ENCODE measurements at regions of chr2 and their contacts with region 1.

Region 1: DNA sequence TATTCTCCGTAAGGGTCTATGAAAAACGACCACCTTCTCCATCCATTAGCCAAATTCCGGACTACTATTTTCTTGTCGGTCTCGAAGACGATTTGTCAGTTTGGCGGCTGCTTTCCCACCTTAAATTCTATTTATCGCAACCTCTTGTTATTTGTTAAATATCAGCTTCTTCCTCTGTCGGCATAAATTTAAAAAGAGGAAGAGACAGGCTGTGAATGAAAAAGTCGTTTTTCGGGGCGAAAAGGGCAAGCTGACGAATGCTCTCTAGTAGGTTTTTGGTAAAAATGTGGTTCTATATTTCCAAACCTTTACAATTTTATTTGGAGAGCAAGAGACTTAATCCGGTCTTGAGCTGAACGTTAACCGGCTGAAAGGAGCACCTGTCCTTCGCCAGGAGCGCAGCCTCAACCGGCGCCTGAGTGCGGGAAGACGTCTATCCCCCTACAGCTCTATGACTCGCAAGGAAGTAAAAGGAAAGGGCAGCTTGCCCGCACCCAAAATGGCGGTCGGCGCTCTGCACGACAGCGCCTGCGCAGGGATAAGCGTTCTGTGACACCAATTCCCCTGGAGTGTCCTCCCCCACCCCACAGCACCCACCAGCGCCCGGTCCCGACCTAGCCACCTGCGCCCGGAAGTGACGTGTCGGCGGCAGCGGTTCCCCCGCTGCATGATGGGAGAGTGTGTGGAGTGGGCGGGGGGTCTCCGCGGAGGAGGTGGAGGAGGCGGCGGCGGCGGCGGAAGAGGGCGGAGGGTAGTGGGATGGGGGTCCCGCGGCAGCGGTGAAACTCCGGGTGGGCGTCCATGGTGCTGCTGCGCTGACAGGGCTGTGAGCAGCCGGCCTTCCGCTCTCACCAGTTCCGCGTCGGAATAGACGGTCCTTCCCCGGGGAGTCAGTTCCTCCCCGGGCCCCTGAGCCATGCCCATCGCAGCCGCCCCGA is at the start of gene AFTPH:
- DNase-seq: peak; percentile 99
- H3K4me3 Mint-ChIP-seq: peak within 1 kb of the TSS; percentile 99
- H3K27ac Mint-ChIP-seq: peak within 1 kb of the TSS; percentile 100
- H3K4me1 Mint-ChIP-seq: peaks cover 26% of the 10 kb centered on the region
- H3K27me3 Mint-ChIP-seq: no peaks in the 10 kb centered on the region
- total RNA-seq, gene AFTPH: 25.3 to 27.3 TPM

Region 2: DNA sequence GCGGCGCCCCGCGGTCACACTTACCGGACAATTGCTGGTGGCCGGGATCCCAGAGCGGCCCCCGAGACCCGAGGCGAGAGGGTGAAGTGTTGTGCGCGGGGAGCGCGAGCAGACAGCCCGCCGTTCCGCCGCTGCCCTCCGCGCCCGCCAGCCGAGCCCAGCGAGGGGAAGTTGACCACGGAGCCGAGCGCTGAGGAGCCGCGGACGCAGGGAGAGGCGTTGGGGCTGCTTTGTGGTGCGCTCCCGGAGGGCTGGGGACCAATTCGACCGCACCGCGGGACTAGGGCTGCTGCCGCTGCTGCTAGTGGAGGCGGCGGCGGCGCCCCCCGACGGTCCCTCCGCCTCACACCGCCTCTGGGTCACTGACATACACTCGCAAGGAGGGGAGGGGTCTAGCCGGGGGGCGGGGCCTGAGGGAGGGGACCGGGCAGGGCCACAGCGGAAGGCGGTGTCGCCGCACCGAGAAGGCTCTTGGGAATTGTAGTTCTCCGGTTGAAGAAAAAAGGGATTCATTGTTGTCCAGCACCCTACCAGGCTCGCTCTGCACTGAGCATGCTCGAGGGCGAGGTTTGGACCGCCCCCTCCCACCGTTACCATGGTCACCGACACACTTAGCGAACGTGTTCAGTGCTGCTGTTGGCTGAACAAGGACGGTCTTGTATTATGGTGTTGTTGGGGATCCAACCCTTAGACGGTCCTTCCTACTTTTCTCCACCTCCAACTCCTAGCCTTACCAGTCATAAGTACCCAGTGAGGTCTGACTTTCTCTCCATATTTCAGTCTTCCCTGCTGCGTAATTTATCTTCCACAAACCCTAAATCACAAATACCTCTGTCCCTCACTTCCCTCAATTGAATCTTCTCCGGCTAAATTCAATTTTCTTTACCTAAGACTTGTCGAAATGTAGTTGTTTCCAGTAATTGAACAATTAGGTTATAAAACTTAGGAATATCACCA is 379.6 kb before region 1 on chr2 and contains the start of gene PELI1:
- CTCF ChIA-PET with region 1: no interaction called
- intact Hi-C with region 1: loop called (anchors 2 kb)
- DNase-seq: peak; percentile 98
- H3K4me3 Mint-ChIP-seq: peak within 1 kb of the TSS; percentile 94
- H3K27ac Mint-ChIP-seq: peak within 1 kb of the TSS; percentile 94
- H3K4me1 Mint-ChIP-seq: peaks cover 31% of the 10 kb centered on the region
- H3K27me3 Mint-ChIP-seq: no peaks in the 10 kb centered on the region
- total RNA-seq, gene PELI1: 25.7 to 28.0 TPM

Region 3: DNA sequence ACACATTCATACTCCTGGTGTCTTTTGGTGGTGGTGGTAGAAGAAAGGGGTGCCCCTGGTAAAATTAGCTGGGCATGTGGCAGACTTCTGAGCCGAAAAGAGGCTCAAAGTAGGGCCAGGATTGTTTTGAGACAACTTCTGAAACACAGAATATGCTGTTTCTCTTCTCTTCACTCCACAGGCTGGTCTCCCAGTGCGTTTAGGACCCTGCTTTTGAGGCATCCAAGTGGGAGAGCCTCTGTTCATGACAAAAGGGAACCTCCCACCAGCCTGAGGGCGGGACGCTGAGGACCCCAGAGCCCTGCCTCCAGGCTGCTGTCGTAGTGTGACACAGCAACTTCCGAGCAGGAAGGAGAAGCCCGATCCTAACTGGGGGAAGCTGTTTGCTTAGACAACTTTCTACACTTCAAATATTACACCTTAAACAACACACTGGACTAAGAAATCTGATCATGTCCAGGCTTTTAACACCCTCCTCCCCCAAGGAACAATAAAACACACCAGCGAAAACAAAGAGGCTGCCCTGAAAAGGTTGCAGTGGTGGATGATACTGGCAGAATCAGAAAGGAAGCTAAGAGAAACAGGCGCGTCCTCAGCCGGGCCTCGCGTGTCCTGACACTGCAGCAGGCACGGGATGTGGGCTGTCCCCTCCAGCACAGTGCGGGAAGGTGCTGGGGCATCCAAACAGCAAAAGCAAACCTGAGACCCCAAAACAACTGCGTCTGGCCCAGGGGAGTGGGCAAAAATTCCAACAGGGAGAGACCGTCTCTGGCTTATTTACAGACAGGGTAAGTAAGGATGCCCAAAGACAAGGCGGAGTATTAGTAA is 120.5 kb after region 1 on chr2:
- CTCF ChIA-PET with region 1: interaction called, 5 read pairs
- intact Hi-C with region 1: loop called (anchors 1 kb)
- DNase-seq: peak; percentile 78
- H3K4me3 Mint-ChIP-seq: peak overlapping the region; percentile 87
- H3K27ac Mint-ChIP-seq: peak overlapping the region; percentile 87
- H3K4me1 Mint-ChIP-seq: peaks cover 80% of the 10 kb centered on the region
- H3K27me3 Mint-ChIP-seq: no peaks in the 10 kb centered on the region

Region 4: GRCh38 chr2:64757126-64757525 is 233.2 kb after region 1 on chr2:
- CTCF ChIA-PET with region 1: no interaction called
- intact Hi-C with region 1: no loop called
- DNase-seq: no peak
- H3K4me3 Mint-ChIP-seq: no peak overlapping the region
- H3K27ac Mint-ChIP-seq: no peak overlapping the region
- H3K4me1 Mint-ChIP-seq: peaks cover 7% of the 10 kb centered on the region
- H3K27me3 Mint-ChIP-seq: no peaks in the 10 kb centered on the region

Region 5: DNA sequence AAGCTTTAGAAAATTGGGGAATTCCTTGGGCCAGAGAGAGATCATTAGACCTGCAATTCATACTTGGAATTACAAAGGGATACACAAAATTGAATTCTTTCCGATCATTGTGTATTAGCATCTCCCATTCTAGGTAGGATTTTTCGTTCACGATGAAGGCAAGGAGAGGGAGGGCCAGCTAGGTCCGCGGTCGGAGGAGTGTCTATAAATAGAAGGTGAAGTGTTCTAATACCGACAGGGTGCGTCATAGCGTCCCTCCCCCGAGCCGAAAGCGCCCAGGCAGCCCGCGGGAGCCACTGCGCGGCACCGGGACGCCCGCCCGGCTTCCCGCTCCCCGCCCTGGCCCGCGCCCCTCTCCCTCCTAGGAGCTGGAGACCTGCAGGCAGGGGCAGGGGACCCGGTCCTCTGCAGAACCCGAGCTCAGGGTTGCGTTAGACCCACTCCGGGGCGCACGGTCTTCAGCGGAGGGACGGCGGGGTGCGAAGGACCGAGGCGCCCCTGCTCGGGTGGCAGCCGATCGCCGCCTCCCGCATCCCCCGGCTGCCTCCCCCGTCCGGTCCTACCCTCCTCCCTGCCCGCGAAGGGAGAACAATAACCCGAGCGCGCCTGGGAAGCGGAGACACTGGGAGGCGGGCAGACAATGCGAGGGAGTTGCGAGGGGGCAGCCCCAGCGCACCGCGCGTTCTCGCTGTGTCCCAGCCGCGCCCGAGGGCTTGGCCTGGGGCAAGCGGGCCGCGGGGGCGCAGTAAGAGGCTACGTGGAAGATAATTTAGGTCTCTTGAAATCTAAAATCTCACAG is 243.9 kb after region 1 on chr2:
- CTCF ChIA-PET with region 1: no interaction called
- intact Hi-C with region 1: loop called (anchors 1 kb)
- DNase-seq: peak; percentile 85
- H3K4me3 Mint-ChIP-seq: peak overlapping the region; percentile 80
- H3K27ac Mint-ChIP-seq: peak overlapping the region; percentile 76
- H3K4me1 Mint-ChIP-seq: peaks cover 26% of the 10 kb centered on the region
- H3K27me3 Mint-ChIP-seq: no peaks in the 10 kb centered on the region

Region 6: DNA sequence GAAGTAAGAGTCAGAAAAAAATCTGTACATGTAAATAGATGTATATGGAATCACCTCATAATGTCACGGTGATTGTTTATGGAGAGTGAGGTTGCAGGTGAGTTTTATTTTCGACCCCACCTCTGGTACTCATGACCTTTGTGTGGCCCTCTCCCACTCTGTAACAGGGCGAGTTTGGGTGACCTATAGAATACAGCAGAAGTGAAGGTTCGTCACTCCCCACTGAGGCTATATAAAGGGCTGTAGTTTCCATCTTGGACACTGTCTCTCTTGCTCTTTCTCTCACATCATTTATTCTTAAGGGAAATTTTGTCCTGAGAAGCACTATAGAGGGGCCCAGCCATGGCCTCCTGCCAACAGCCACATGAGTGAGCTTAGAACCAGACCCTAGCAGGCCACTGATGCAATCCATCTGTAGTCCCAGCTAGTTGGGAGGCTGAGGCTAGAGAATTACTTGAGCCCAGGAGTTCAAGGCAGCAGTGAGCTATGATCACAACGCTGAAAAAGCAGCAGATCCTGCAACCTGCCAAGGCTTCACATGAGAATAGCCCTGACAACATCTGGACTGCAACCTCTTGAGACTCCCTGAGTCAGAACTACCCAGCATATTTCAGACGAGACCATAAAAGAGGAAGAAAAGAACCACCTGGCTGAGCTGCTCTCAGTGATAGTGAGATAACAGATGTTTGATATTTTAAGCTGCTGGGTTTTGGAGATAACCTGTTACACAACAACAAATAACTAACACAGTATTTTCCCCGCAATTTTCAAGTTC is 391.0 kb after region 1 on chr2:
- CTCF ChIA-PET with region 1: no interaction called
- intact Hi-C with region 1: loop called (anchors 1 kb)
- DNase-seq: no peak
- H3K4me3 Mint-ChIP-seq: no peak overlapping the region
- H3K27ac Mint-ChIP-seq: no peak overlapping the region
- H3K4me1 Mint-ChIP-seq: peaks cover 14% of the 10 kb centered on the region
- H3K27me3 Mint-ChIP-seq: no peaks in the 10 kb centered on the region

Region 7: GRCh38 chr2:65227425-65228262 is 703.7 kb after region 1 on chr2 and contains the start of gene ACTR2:
- CTCF ChIA-PET with region 1: no interaction called
- intact Hi-C with region 1: loop called (anchors 2 kb)
- DNase-seq: peak; percentile 96
- H3K4me3 Mint-ChIP-seq: peak within 1 kb of the TSS; percentile 98
- H3K27ac Mint-ChIP-seq: peak within 1 kb of the TSS; percentile 99
- H3K4me1 Mint-ChIP-seq: peaks cover 41% of the 10 kb centered on the region
- H3K27me3 Mint-ChIP-seq: no peaks in the 10 kb centered on the region
- total RNA-seq, gene ACTR2: 358 to 366 TPM

Measured in activated naive CD4-positive, alpha-beta T cell treated with anti-CD3 and anti-CD28 coated beads for 36 hours (primary cell).